HEK293T (cell line): ENCODE measurements at regions of chr13 and their contacts with region 1.

Region 1: GRCh38 chr13:62502588-62502987 is 1086.9 kb upstream of the PCDH20 start:
- DNase-seq: no peak

Region 2: DNA sequence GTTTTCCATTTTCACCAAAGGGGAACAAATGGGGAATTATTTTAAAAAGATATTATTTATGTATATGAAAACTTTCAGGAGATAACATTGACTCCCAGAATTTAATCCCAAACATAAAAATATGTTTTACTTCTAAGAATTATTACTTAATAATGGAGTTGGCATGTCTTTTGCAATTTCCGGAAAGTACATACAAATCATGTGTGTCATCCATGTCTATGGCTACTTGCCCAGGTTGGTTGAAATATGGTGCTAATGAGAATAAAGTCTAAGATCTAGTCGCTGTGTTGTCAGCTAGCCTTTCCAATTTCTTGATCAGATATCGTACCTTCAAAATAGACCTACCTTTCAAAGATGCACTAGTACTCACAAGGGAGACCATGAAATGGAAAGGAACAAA is 83.7 kb before region 1 on chr13:
- CTCF ChIA-PET with region 1: no interaction called
- POLR2A ChIA-PET with region 1: no interaction called
- DNase-seq: no peak

Region 3: GRCh38 chr13:64239372-64239771 is 1736.8 kb after region 1 on chr13:
- CTCF ChIA-PET with region 1: interaction called, 11 read pairs
- POLR2A ChIA-PET with region 1: no interaction called
- DNase-seq: no peak